Aorta (tissue), 5 donors: ENCODE measurements at regions of chr15 and their contacts with region 1.

Region 1: DNA sequence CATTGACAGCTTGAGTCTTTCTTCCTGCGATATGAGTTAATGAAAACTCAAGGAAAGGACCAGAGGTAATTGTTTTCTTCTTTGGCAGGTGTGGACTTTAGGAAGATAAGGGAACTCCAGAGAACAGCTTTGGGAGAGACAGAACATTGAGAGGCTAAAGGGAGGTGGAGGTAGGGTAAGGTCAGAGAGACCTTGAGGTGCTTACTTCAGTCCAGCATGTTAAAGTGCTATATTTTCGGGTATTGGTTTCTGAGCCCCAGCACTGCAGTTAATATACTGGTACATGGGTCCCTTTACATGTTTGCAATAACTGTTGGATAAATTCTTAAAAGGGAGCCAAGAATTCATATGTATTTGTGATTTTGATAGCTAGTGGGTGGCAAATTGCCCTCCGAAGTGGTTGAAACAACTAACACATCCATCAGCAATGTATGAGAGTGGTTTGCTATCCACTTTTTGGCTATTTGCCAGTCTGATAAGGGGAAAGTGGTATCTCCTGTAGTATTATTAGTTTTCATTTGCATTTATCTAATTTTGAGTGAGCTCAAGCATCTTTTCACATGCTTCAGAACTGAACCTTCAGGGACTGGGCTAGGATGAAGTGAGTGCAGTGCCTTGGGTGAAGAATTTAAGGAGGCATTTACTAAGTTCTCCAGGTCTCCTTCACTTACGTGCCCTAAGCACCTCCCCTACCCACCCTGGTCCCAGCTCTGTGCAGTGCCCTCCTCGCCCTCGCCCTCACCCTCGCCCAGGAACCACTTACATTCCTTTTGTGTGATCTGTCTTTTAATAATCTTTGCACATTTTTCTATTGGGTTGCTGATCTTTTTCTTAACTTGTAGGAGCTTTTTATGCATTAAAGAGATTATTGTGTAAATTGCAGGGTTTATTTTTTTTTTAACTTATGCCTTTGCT is 322.4 kb downstream of the THSD4 start:
- DNase-seq: no peak
- ATAC-seq: no peak
- H3K4me3 ChIP-seq: no peak overlapping the region
- H3K27ac ChIP-seq: no peak overlapping the region
- H3K4me1 ChIP-seq: peaks cover 0 to 8% of the 10 kb centered on the region in 2 donors
- H3K27me3 ChIP-seq: no peaks in the 10 kb centered on the region

Region 2: DNA sequence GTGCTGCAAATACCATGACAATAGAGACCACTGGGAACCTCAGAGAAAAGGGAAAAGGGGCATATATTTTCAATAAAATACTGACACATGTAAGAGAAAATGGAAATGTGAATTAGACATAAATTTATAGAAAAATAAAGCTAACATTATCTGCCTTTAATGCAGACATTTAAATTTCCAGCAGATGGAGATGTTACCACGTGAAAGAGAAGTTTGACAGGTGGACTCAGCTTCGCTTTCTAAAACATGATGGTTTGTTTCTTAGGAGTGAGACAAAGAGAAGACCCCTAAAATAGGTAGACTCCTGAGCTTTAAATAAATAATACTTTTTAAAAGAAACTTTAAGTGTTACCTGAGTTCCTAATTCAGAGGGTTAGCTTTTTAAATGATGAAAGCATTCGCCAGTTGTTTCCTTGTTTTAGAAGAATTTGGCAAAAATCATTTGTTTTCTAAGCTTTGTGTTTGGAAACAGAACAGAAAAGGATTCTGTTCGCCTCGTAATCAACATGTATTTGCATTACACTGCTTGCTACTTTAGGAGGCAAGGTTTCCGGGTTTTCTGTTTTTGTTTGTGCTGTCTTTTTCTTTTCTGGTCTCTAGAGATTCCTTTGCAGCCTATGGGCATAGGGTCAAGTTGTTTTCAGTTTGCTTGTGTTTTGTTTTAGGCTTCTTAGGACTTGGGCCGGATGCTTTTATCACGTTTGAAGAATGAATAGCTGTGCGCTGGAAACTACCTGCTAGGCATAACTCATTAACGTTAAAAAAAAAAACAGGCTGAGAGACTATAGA is 51.0 kb before region 1 on chr15:
- intact Hi-C with region 1: loop called (anchors 2 kb)
- DNase-seq: no peak
- ATAC-seq: no peak
- H3K4me3 ChIP-seq: no peak overlapping the region
- H3K27ac ChIP-seq: no peak overlapping the region
- H3K4me1 ChIP-seq: peaks cover 1 to 12% of the 10 kb centered on the region in 2 donors
- H3K27me3 ChIP-seq: no peaks in the 10 kb centered on the region

Region 3: DNA sequence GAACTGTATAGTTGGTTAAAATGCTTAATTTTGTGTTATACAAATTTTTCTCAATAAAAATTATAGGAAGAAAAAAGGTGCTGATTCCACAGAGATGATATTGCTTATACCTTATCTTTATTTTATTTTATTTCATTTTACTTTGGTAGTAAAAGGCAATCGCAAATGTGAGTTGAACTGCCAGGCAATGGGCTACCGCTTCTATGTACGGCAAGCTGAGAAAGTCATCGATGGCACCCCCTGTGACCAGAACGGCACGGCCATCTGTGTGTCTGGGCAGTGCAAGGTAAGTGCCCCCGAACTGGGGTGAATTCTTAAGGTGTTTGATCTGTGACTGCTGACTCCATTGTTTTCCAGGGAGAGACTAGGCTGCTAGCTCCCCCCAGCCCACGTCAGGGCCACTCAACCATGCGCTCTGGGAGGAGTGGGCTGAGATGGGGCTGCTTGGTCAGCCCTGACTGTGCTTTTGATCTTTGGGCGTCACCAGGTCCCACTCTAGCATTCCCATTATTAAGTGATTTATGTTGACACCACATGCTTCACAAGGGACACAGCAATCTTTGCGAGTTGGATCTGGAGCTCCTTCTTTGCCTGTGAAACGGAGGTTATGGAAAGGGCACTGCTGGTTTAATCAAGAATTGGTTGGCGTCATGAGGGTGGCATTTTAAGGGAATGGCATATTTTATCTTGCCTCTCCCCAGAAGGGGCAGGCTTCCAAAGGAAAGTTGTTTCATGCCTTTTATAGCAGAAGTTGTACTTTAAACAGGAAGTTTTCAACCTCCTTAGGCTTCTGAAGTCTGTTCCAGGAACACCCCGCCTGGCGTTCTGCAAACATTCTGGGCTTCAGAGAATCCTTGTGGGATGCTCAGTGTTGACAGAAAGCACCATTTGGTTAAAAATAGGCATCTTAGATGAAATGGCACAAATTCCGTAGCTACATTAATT is 25.9 kb before region 1 on chr15:
- intact Hi-C with region 1: no loop called
- DNase-seq: peak; percentile 68 to 81
- ATAC-seq: peak; percentile 79
- H3K4me3 ChIP-seq: no peak overlapping the region
- H3K27ac ChIP-seq: peak overlapping the region; percentile 98 to 99
- H3K4me1 ChIP-seq: peaks cover 0 to 8% of the 10 kb centered on the region in 2 donors
- H3K27me3 ChIP-seq: no peaks in the 10 kb centered on the region

Region 4: GRCh38 chr15:71485099-71485693 is 47.5 kb after region 1 on chr15:
- intact Hi-C with region 1: no loop called
- DNase-seq: no peak
- ATAC-seq: no peak
- H3K4me3 ChIP-seq: no peak overlapping the region
- H3K27ac ChIP-seq: no peak overlapping the region
- H3K4me1 ChIP-seq: peaks cover 0 to 9% of the 10 kb centered on the region in 2 donors
- H3K27me3 ChIP-seq: no peaks in the 10 kb centered on the region